HEK293 (cell line): ENCODE measurements at regions of chr15 and their contacts with region 1.

Region 1: DNA sequence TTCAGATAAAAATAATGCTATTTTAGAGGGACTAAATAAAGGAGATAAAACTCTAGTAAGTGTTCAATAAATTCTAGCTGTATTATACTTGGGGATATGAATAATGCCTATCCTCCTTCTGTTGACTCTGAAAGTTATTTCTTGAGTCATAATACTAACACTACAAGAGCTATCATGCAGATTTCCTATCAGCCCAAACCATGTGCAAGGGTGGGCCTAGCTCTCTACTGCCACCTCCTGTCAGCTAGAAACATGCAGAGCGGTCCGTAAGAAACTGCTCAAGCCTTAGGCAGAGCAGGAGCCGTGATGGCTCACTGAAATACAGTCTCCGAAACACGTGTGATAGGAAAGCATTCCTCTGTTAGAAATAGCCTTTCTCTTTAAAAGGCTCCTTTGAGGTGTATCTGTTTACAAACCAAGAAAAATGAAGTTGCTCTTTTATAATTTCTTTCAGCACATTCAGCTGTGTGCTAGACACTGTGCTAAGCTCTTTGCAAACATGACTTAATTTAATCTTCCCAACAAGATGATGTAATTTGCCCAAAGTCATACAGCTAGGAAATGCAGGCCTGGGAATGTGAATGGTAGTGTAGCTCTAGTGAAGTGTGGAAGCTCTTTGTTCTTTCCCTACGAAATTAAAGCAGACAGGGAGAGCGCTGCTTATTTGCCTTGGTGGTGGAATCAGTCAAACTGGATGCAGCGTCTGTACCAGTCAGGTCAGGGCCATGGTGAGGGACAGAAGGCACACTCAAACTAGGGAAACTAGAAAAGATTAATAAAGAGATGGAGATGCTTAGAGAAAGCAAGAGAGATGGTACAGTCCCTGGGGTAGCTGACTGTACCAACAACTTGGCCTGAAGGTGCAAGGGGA is 43.1 kb downstream of the MTHFS start:
- H3K4me3 ChIP-seq: no peak overlapping the region
- H3K27ac ChIP-seq: no peak overlapping the region
- H3K4me1 ChIP-seq: no peaks in the 10 kb centered on the region
- CTCF ChIP-seq: peak; percentile 74

Region 2: DNA sequence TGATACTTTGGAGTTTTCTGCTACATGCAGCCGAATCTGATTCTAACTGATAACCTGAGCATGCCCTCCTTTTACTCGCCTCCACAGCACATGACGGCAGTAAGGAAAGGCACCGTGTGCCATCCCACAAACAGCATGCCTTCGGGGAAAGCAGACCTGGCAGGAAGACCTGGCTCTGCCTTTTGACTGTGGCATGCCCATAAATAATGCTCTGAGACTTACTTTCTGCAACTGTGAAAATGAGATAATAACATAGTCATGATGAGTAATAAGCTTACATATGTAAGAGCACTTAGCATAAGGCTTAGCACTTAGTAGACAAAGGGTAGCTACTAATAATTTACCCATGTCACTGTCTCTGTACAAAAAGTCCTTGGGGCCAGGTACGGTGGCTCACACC is 10.2 kb after region 1 on chr15:
- CTCF ChIA-PET with region 1: interaction called, 42 read pairs
- POLR2A ChIA-PET with region 1: interaction called, 4 read pairs
- H3K4me3 ChIP-seq: no peak overlapping the region
- H3K27ac ChIP-seq: no peak overlapping the region
- H3K4me1 ChIP-seq: peaks cover 4% of the 10 kb centered on the region; the same call in 1 of the 2 replicates
- CTCF ChIP-seq: no peak

Region 3: GRCh38 chr15:79872358-79873017 is 18.8 kb after region 1 on chr15:
- CTCF ChIA-PET with region 1: interaction called, 42 read pairs
- POLR2A ChIA-PET with region 1: no interaction called
- H3K4me3 ChIP-seq: no peak overlapping the region
- H3K27ac ChIP-seq: no peak overlapping the region
- H3K4me1 ChIP-seq: no peaks in the 10 kb centered on the region
- CTCF ChIP-seq: no peak

Region 4: GRCh38 chr15:79932447-79932846 is 78.8 kb after region 1 on chr15:
- CTCF ChIA-PET with region 1: no interaction called
- POLR2A ChIA-PET with region 1: no interaction called
- H3K4me3 ChIP-seq: no peak overlapping the region
- H3K27ac ChIP-seq: no peak overlapping the region
- H3K4me1 ChIP-seq: no peaks in the 10 kb centered on the region
- CTCF ChIP-seq: no peak

Region 5: GRCh38 chr15:79989682-79990081 is 136.0 kb after region 1 on chr15:
- CTCF ChIA-PET with region 1: interaction called, 17 read pairs
- POLR2A ChIA-PET with region 1: no interaction called
- H3K4me3 ChIP-seq: no peak overlapping the region
- H3K27ac ChIP-seq: no peak overlapping the region
- H3K4me1 ChIP-seq: no peaks in the 10 kb centered on the region
- CTCF ChIP-seq: no peak